H1 (cell line): ENCODE measurements at regions of chr11 and their contacts with region 1.

Region 1: GRCh38 chr11:128928400-128928799 is 14.3 kb downstream of the TP53AIP1 start:
- DNase-seq: no peak
- H3K4me3 ChIP-seq: no peak overlapping the region
- H3K27ac ChIP-seq: no peak overlapping the region
- H3K4me1 ChIP-seq: peaks cover 5 to 41% (median 17%) of the 10 kb centered on the region in 4 experiments
- H3K27me3 ChIP-seq: peaks cover 2 to 50% (median 42%) of the 10 kb centered on the region in 4 experiments
- CTCF ChIP-seq: no peak
- EP300 ChIP-seq: no peak
- POLR2A ChIP-seq: no peak
- RAD21 ChIP-seq: no peak

Region 2: DNA sequence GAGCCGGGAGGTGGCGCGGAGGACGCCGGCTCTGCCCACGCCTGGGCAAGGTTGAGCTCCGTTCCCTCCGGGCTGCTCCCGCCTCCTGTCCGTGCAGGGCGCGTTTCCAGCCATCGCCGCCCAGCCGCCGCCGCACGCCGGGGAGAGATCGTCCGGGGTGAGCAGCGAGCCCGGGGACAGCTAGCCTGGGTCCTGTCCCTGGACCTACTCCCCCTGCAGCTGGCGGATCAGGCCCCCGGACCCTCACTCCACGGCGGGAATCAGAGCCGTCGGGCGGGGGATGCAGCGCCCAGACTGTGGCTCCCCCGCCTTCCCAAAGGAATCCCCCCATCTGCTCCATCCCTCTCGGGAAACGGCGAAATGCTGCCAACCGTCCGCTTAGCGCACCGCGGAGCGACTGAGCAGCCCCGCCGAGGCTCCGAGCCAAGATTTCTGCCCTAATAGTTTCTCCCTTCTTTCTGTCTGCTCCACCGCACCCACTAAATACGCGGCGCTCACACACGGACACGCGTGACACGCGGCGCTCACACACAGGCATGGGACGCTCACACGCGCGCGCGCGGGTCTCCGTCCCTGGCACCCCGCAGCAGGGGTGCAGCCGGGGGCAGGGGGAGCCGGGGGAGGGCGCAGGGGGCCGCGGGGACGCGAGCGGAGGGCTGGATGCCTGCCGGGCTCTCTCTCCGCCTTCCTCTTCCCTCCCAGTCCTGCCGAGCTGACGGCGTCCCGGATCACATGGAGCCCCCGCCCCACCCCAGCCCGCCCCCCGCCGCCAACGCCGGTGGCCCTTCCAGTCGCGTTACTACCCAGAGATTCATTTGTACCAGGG is 37.6 kb before region 1 on chr11 and contains the start of gene KCNJ5:
- CTCF ChIA-PET with region 1: interaction called, 243 read pairs
- POLR2A ChIA-PET with region 1: no interaction called
- DNase-seq: peak in 1 of 2 experiments; percentile 77
- H3K4me3 ChIP-seq: peak within 1 kb of the TSS; percentile 35 to 67 (median 50)
- H3K27ac ChIP-seq: no peak within 1 kb of the TSS
- H3K4me1 ChIP-seq: peaks cover 4 to 15% (median 12%) of the 10 kb centered on the region in 4 experiments; a peak in 6 of 7 replicates
- H3K27me3 ChIP-seq: peaks cover 35 to 84% (median 82%) of the 10 kb centered on the region in 4 experiments
- CTCF ChIP-seq: no peak
- EP300 ChIP-seq: no peak
- POLR2A ChIP-seq: no peak
- RAD21 ChIP-seq: no peak
- total RNA-seq, gene KCNJ5: not detected in 2 replicates

Region 3: DNA sequence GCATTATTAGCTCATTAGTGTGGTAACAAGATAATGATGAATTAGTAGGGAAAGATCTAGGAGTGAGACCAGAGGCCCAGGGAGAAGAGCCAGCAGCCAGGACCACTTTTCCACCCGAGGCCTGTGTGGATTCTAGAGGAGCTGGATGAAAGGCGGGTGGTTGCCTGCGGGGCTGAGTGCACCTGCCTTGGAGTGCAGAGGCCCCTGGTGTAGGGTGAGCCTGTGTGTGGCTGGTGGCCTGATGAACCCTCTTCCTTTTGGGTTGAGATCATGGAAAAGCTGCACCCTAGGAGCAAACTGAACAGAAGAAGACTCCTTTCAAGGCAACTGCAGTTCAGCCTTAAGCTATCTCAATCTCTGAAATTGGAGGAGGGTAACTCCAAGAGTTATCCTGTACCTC is 20.2 kb after region 1 on chr11:
- CTCF ChIA-PET with region 1: interaction called, 215 read pairs
- POLR2A ChIA-PET with region 1: no interaction called
- DNase-seq: no peak
- H3K4me3 ChIP-seq: no peak overlapping the region
- H3K27ac ChIP-seq: no peak overlapping the region
- H3K4me1 ChIP-seq: no peaks in the 10 kb centered on the region
- H3K27me3 ChIP-seq: peaks cover 0 to 2% (median 0%) of the 10 kb centered on the region in 4 experiments; a peak in 3 of 7 replicates
- CTCF ChIP-seq: peak; percentile 67 to 73 (median 71)
- EP300 ChIP-seq: no peak
- POLR2A ChIP-seq: no peak
- RAD21 ChIP-seq: peak; percentile 73 to 79

Region 4: DNA sequence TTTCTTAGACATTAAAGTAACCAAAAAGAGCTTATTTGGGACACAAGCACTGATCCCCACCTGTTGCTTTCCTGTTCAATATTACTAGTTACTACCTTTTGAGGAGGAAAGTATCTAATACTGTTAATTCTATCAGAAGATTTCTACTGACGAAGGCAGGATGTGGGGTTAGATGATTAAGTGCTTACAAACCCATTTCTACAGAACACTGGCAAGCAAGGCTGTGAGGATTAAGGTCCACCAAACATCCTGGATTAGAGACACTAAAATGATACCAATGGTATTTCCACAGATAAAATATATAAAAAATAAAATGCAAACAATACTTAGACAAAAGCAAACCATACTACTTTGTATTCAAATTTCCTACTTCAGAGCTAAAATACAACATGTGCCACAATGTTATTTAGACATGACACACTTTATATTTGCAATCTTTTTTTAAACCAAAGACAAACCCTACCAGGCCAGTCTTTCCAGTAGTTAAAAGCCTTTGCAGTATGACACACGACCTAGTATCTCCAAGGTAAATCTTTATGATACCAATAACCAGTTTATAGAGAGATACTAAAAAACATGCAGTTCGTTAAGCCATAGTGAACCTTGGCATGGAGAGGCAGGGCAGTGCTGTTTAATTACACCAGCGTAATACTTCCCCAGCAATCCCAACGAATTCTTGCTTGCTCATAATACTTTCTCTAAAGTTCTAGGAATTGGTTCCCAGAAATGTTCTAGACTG is 85.5 kb after region 1 on chr11:
- CTCF ChIA-PET with region 1: no interaction called
- POLR2A ChIA-PET with region 1: no interaction called
- DNase-seq: no peak
- H3K4me3 ChIP-seq: no peak overlapping the region
- H3K27ac ChIP-seq: no peak overlapping the region
- H3K4me1 ChIP-seq: no peaks in the 10 kb centered on the region
- H3K27me3 ChIP-seq: no peaks in the 10 kb centered on the region; a peak in 1 of 7 replicates
- CTCF ChIP-seq: no peak
- EP300 ChIP-seq: no peak
- POLR2A ChIP-seq: no peak
- RAD21 ChIP-seq: no peak